GM10248 (cell line): ENCODE measurements at regions of chr14 and their contacts with region 1.

Region 1: GRCh38 chr14:63727774-63728728 is at the start of gene SGPP1:
- DNase-seq: peak; percentile 94
- CTCF ChIP-seq: peak; percentile 56

Region 2: DNA sequence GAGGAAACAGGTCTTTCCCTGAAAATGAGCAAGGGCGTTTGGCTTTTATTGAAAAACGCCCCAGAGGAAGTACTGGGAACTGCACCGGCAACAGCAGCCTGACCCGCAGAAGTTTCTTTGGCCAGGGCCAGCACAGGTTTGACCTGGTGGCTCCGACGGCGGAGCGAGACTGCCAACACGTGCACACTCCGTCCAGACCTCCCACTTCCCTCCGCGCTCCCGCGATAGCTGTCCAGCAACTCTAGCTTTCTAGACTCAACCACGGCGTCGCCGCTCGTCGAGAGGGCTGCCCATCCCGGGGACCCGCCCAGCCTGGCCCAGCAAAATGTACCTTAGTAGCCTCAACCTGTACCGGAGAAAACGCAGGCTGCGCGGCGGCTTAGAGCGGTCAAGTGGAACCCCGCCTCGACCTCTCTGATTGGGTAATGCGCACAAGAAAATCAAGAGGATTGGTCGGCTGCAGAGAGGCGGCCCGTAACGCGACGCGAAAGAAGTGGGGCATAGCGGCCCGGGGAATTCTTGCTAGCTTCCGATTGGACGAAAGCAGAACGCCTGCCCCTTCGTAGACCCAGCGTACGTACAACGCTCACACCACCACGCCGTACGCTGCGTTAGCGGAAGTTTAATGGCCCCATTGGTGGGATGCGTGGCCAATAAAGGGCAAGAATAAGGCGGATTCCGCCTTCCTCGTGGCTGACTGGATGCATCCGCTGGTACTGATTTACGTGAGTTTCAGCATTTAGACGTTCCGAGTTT is 86.4 kb before region 1 on chr14 and contains the start of gene WDR89:
- CTCF ChIA-PET with region 1: interaction called, 10 read pairs
- POLR2A ChIA-PET with region 1: interaction called, 6 read pairs
- DNase-seq: peak; percentile 95
- CTCF ChIP-seq: peak; percentile 52

Region 3: DNA sequence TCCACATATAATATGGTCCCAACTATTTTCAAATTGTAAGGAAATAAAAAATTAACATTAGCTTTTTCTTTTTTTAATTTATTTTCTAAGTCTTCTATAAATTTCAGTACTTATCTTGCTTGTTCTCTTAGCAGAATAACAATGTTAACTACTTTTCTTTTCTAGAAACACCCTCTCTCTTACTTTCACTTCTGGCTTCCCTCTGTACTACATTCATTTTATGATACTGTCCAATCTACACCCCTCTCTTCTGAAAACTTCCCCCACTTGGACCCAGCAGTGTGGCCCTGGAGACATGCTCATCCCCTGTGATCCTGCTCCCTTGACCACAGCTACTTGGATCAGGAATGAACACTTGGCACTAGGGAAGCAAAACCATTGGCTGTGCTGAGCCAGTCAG is 15.9 kb before region 1 on chr14:
- CTCF ChIA-PET with region 1: interaction called, 43 read pairs
- POLR2A ChIA-PET with region 1: no interaction called
- DNase-seq: no peak
- CTCF ChIP-seq: no peak

Region 4: GRCh38 chr14:63717702-63718101 is 10.3 kb before region 1 on chr14:
- CTCF ChIA-PET with region 1: interaction called, 43 read pairs
- POLR2A ChIA-PET with region 1: no interaction called
- DNase-seq: no peak
- CTCF ChIP-seq: no peak

Region 5: DNA sequence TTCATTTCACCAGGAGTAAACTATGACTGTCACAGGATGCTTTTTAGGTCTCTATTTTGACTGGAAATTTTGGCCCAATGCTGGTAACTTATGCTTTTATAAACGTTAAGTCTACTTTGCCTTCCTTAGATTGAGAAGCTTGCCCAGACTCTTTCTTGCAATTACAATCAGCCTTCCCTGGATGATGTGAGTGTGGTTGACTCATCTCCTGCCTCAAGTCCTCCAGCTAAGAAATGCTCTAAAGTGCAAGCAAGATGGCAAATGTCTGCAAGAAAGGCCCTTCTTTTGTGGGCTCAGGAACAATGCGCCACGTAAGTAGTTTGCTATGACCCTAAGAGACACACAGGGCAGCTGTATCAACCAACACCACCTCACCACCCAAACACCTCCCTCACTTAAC is 221.6 kb after region 1 on chr14:
- CTCF ChIA-PET with region 1: no interaction called
- POLR2A ChIA-PET with region 1: no interaction called
- DNase-seq: no peak
- CTCF ChIP-seq: no peak